Gastrocnemius medialis (tissue), 4 donors: ENCODE measurements at regions of chr16 and their contacts with region 1.

Region 1: GRCh38 chr16:1971796-1972489 is at the start of gene TBL3:
- DNase-seq: peak; percentile 87 to 90
- ATAC-seq: peak; percentile 95 to 96
- H3K4me3 ChIP-seq: peak within 1 kb of the TSS; percentile 80 to 99 (median 86)
- H3K27ac ChIP-seq: peak within 1 kb of the TSS; percentile 86 to 94 (median 92)
- H3K4me1 ChIP-seq: peaks cover 13 to 23% of the 10 kb centered on the region in 2 donors
- H3K27me3 ChIP-seq: no peaks in the 10 kb centered on the region
- CTCF ChIP-seq: peak in 2 of 5 experiments; percentile 54 to 64
- POLR2A ChIP-seq: peak; percentile 92 to 96
- total RNA-seq, gene TBL3: 48.2 to 79.5 (median 71.4) TPM

Region 2: GRCh38 chr16:2009789-2010510 is 38.0 kb after region 1 on chr16 and contains the start of gene ZNF598:
- in situ Hi-C with region 1: no loop called
- intact Hi-C with region 1: loop called (anchors 1 kb)
- DNase-seq: peak; percentile 61 to 75
- ATAC-seq: peak; percentile 90 to 95
- H3K4me3 ChIP-seq: peak within 1 kb of the TSS; percentile 63 to 97 (median 84)
- H3K27ac ChIP-seq: peak within 1 kb of the TSS; percentile 85 to 99 (median 95)
- H3K4me1 ChIP-seq: peaks cover 37 to 47% of the 10 kb centered on the region in 2 donors
- H3K27me3 ChIP-seq: no peaks in the 10 kb centered on the region
- CTCF ChIP-seq: peak in 1 of 5 experiments; percentile 8
- POLR2A ChIP-seq: peak; percentile 85 to 96
- total RNA-seq, gene ZNF598: 57.0 to 92.2 (median 75.4) TPM

Region 3: GRCh38 chr16:2023098-2023925 is 51.4 kb after region 1 on chr16:
- in situ Hi-C with region 1: no loop called
- intact Hi-C with region 1: no loop called
- DNase-seq: peak; percentile 87 to 88
- ATAC-seq: peak; percentile 80 to 83
- H3K4me3 ChIP-seq: peak overlapping the region; percentile 37 to 63 (median 44)
- H3K27ac ChIP-seq: peak overlapping the region; percentile 54 to 80 (median 64)
- H3K4me1 ChIP-seq: peaks cover 0 to 16% of the 10 kb centered on the region in 2 donors
- H3K27me3 ChIP-seq: peaks cover 27 to 33% (median 31%) of the 10 kb centered on the region in 3 donors
- CTCF ChIP-seq: peak; percentile 95 to 99 (median 98)
- POLR2A ChIP-seq: peak in 1 of 2 donors; percentile 48